ENCODE measurements at regions of chr11 and their contacts with region 1.

Region 1: DNA sequence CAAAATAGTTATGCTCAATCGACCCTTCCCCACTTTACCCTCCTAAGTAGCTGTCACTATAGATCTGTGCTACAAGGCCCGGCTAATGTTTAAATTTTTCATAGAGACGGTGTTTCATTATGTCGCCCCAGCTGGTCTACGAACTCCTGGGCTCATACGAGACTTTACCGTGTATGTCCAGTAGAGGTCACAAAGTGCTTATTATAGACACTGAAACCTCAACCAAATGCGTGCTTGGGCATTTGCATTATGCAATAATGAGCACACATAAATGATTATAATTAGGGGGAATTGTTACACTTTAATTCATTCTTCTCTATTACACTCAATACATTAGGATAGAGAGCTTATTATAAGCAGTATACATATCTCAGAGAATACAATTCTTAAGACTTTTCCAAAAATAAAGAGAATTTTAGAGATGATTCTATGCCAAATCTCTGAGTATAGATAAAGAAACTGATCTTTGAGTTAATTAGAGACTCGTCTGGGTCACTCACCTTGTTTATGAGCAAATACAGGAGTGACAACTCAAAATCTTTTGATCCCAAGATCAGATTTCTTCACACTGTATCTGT is 12.5 kb upstream of the MRPL16 start:
- DNase-seq: no peak
- H3K4me3 ChIP-seq: no peak overlapping the region
- H3K27ac ChIP-seq: no peak overlapping the region
- H3K4me1 ChIP-seq: peaks cover 0 to 9% (median 2%) of the 10 kb centered on the region in 6 donors
- H3K27me3 ChIP-seq: no peaks in the 10 kb centered on the region
- CTCF ChIP-seq: peak in 10 of 11 experiments; percentile 21 to 72 (median 53)
- POLR2A ChIP-seq: no peak

Region 2: GRCh38 chr11:60029015-60029632 is 206.0 kb after region 1 on chr11:
- intact Hi-C with region 1: no loop called
- DNase-seq: no peak
- H3K4me3 ChIP-seq: no peak overlapping the region
- H3K27ac ChIP-seq: no peak overlapping the region
- H3K4me1 ChIP-seq: no peaks in the 10 kb centered on the region
- H3K27me3 ChIP-seq: no peaks in the 10 kb centered on the region
- CTCF ChIP-seq: no peak
- POLR2A ChIP-seq: no peak

Region 3: DNA sequence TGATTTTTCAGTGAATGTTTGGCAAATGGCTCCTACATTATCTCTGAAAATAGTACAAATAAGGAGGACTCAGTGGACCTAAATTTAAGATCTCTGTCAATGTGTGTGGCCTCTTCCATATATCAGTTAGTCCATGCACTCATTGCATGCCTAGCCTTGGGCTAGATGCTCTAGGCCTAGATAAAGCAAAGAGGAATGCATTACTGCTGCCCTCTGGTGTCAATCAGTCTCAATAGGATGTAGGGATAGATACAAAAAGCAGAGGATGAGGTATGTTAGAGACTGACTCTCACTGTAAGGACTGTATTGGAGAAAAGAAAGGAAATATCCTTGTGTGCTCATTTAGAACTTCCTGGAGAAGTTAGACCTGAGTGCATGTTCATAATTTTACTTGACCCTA is 307.4 kb after region 1 on chr11:
- intact Hi-C with region 1: loop called (anchors 5 kb)
- DNase-seq: no peak
- H3K4me3 ChIP-seq: no peak overlapping the region
- H3K27ac ChIP-seq: no peak overlapping the region
- H3K4me1 ChIP-seq: peaks cover 0 to under 1% (median 0%) of the 10 kb centered on the region in 6 donors
- H3K27me3 ChIP-seq: no peaks in the 10 kb centered on the region
- CTCF ChIP-seq: peak in 7 of 11 experiments; percentile 11 to 51 (median 35)
- POLR2A ChIP-seq: no peak